ENCODE measurements at regions of chr16 and their contacts with region 1.

Region 1: GRCh38 chr16:15427648-15428239 is 6.6 kb upstream of the BMERB1 start:
- DNase-seq: peak; percentile 69
- ATAC-seq: peak; percentile 85
- H3K4me3 ChIP-seq: peak overlapping the region in 2 of 3 experiments; percentile 20 to 26; a peak in 3 of 6 replicates
- H3K27ac ChIP-seq: no peak overlapping the region
- H3K4me1 ChIP-seq: peaks cover 6% of the 10 kb centered on the region; the same call in 1 of the 2 replicates
- H3K27me3 ChIP-seq: 0 out of 5 replicates have a peak, but pooled peaks cover 0 to 5% of the 10 kb centered on the region in 2 experiments
- CTCF ChIP-seq: peak; percentile 79
- EP300 ChIP-seq: no peak
- POLR2A ChIP-seq: no peak
- RAD21 ChIP-seq: peak; percentile 86

Region 2: GRCh38 chr16:15466886-15467781 is 39.4 kb after region 1 on chr16:
- CTCF ChIA-PET with region 1: interaction called, 28 read pairs
- POLR2A ChIA-PET with region 1: no interaction called
- in situ Hi-C with region 1: loop called (anchors 5 kb)
- intact Hi-C with region 1: loop called (anchors 1 kb)
- DNase-seq: peak; percentile 35
- ATAC-seq: no peak
- H3K4me3 ChIP-seq: no peak overlapping the region
- H3K27ac ChIP-seq: no peak overlapping the region
- H3K4me1 ChIP-seq: no peaks in the 10 kb centered on the region
- H3K27me3 ChIP-seq: no peaks in the 10 kb centered on the region
- CTCF ChIP-seq: peak; percentile 72
- EP300 ChIP-seq: no peak
- POLR2A ChIP-seq: no peak
- RAD21 ChIP-seq: peak; percentile 83

Region 3: GRCh38 chr16:15548482-15548891 is 120.7 kb after region 1 on chr16:
- CTCF ChIA-PET with region 1: interaction called, 23 read pairs
- POLR2A ChIA-PET with region 1: interaction called, 3 read pairs
- in situ Hi-C with region 1: no loop called
- intact Hi-C with region 1: loop called (anchors 2 kb)
- DNase-seq: peak; percentile 45
- ATAC-seq: peak; percentile 73
- H3K4me3 ChIP-seq: no peak overlapping the region
- H3K27ac ChIP-seq: no peak overlapping the region
- H3K4me1 ChIP-seq: peaks cover 43% of the 10 kb centered on the region
- H3K27me3 ChIP-seq: no peaks in the 10 kb centered on the region
- CTCF ChIP-seq: no peak
- EP300 ChIP-seq: no peak
- POLR2A ChIP-seq: no peak
- RAD21 ChIP-seq: no peak

Measured in HepG2 (cell line).